ENCODE measurements at regions of chr12 and their contacts with region 1.

Region 1: DNA sequence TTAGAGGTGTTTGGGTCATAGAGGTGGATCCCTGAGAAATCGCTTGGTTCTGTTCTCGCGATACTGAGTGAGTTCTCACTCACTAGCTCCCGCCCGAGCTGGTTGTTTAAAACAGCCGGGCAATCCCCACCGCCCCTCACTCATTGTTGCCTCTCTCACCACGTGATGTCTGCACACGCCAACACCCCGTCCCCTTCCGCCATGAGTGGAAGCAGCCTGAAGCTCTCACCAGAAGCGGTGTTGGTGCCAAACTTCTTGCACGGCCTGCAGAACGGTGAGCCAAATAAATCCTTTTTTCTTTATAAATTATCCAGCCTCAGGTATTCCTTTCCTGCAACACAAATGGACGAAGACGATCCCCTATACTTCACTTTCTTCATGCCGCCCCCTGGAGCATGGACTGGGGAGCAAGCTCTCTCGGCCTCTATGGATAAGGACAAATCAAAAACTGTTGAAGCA is 45.4 kb upstream of the CCND2 start:
- DNase-seq: no peak
- H3K4me3 ChIP-seq: no peak overlapping the region
- H3K27ac ChIP-seq: no peak overlapping the region
- H3K4me1 ChIP-seq: no peaks in the 10 kb centered on the region
- H3K27me3 ChIP-seq: peaks cover 3% of the 10 kb centered on the region
- CTCF ChIP-seq: no peak
- EP300 ChIP-seq: no peak
- POLR2A ChIP-seq: no peak

Region 2: DNA sequence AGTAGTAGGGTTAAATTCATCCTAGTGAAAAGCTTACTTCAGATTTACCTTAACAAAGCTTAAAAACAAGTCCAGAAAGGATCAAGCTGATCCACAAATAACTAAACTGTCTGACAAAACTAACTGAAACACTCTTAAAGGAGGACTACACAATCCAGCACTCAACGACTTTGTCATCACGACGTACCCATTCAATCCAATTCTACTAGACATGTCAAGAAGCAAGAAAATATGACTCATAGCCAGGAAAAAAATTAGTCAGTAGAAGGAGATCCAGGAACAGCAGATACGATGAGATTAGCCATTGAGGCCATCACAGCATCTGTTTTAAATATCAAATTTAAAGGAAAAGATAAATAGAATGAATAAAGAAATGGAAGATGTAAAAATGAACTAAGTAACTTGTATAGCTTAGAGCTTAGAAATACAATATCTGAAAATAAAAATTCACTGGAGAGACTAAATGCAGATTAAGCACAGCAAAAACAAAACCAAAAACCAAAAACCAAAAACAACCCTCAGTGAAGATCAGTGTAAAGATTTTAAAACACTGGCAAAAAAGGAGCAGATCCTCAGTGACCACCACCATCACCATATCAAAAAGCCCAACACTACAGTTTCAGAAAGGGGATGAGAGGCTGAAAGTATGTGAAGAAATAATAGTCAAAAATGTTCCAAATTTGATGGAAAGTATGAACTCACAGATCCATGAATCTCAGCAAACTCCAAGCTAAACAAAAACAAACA is 49.6 kb before region 1 on chr12:
- in situ Hi-C with region 1: no loop called
- intact Hi-C with region 1: loop called (anchors 2 kb)
- DNase-seq: no peak
- H3K4me3 ChIP-seq: no peak overlapping the region
- H3K27ac ChIP-seq: no peak overlapping the region
- H3K4me1 ChIP-seq: no peaks in the 10 kb centered on the region
- H3K27me3 ChIP-seq: no peaks in the 10 kb centered on the region
- CTCF ChIP-seq: no peak
- EP300 ChIP-seq: no peak
- POLR2A ChIP-seq: no peak

Measured in transverse colon (tissue), 4 donors.